PC-3 (cell line): ENCODE measurements at regions of chr14 and their contacts with region 1.

Region 1: GRCh38 chr14:90060312-90060964 is 1.4 kb upstream of the KCNK13 start:
- DNase-seq: peak; percentile 65
- ATAC-seq: peak; percentile 73
- H3K4me3 ChIP-seq: peak overlapping the region; percentile 69
- H3K27ac ChIP-seq: no peak overlapping the region
- H3K4me1 ChIP-seq: peaks cover 7% of the 10 kb centered on the region; the same call in 1 of the 2 replicates
- H3K27me3 ChIP-seq: peaks cover 17% of the 10 kb centered on the region
- CTCF ChIP-seq: peak; percentile 67

Region 2: GRCh38 chr14:89973234-89973823 is 87.1 kb before region 1 on chr14:
- CTCF ChIA-PET with region 1: interaction called, 3 read pairs
- POLR2A ChIA-PET with region 1: no interaction called
- intact Hi-C with region 1: loop called (anchors 1 kb)
- DNase-seq: peak; percentile 72
- ATAC-seq: peak; percentile 93
- H3K4me3 ChIP-seq: no peak overlapping the region
- H3K27ac ChIP-seq: no peak overlapping the region
- H3K4me1 ChIP-seq: no peaks in the 10 kb centered on the region
- H3K27me3 ChIP-seq: no peaks in the 10 kb centered on the region
- CTCF ChIP-seq: peak; percentile 90

Region 3: GRCh38 chr14:90087433-90087832 is 27.0 kb after region 1 on chr14:
- CTCF ChIA-PET with region 1: no interaction called
- POLR2A ChIA-PET with region 1: no interaction called
- intact Hi-C with region 1: no loop called
- DNase-seq: peak; percentile 73
- ATAC-seq: no peak
- H3K4me3 ChIP-seq: no peak overlapping the region
- H3K27ac ChIP-seq: no peak overlapping the region
- H3K4me1 ChIP-seq: peaks cover 12% of the 10 kb centered on the region
- H3K27me3 ChIP-seq: no peaks in the 10 kb centered on the region
- CTCF ChIP-seq: no peak